ENCODE measurements at regions of chr18 and their contacts with region 1.

Region 1: DNA sequence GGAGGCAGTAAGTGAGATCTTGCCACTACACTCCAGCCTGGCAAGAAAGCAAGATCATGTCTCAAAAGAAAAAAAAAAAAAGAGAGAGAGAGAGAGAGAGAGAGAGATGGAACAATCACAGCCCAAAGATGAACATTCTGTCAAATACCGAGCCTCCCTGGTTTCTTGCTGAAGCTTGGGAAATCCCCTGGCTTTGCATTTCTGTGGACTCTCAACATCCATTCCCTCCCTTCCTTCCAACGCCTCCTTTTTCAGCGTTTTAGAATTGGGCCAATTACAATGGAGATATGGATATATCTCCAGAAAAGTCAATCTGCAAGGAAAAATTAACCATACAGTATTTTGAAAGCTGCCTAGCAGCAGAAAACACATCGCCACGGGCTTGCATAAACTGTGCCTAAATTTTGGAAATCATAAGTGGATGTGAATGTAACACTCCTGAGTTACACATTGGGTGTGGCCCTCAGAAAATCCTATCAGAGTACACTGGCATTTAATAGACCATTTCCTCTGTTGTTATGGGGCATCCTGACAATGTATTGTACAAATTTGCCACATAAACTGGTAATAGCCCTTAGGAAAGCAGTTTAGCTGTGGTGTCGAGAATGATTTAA is 67.2 kb upstream of the PHLPP1 start:
- DNase-seq: no peak
- ATAC-seq: no peak
- H3K4me3 ChIP-seq: no peak overlapping the region
- H3K27ac ChIP-seq: no peak overlapping the region
- H3K4me1 ChIP-seq: peaks cover 10% of the 10 kb centered on the region
- H3K27me3 ChIP-seq: no peaks in the 10 kb centered on the region
- CTCF ChIP-seq: no peak
- EP300 ChIP-seq: no peak
- POLR2A ChIP-seq: no peak
- RAD21 ChIP-seq: no peak

Region 2: GRCh38 chr18:62637807-62638687 is 10.1 kb before region 1 on chr18:
- CTCF ChIA-PET with region 1: interaction called, 13 read pairs
- POLR2A ChIA-PET with region 1: no interaction called
- RAD21 ChIA-PET with region 1: no interaction called
- SMC1A ChIA-PET with region 1: interaction called, 4 read pairs
- in situ Hi-C with region 1: no loop called
- intact Hi-C with region 1: no loop called
- DNase-seq: no peak
- ATAC-seq: peak; percentile 98
- H3K4me3 ChIP-seq: no peak overlapping the region
- H3K27ac ChIP-seq: no peak overlapping the region
- H3K4me1 ChIP-seq: 0 out of 2 replicates have a peak, but pooled peaks cover 6% of the 10 kb centered on the region
- H3K27me3 ChIP-seq: no peaks in the 10 kb centered on the region
- CTCF ChIP-seq: peak; percentile 74 to 84 (median 82)
- EP300 ChIP-seq: no peak
- POLR2A ChIP-seq: no peak
- RAD21 ChIP-seq: peak; percentile 65

Region 3: DNA sequence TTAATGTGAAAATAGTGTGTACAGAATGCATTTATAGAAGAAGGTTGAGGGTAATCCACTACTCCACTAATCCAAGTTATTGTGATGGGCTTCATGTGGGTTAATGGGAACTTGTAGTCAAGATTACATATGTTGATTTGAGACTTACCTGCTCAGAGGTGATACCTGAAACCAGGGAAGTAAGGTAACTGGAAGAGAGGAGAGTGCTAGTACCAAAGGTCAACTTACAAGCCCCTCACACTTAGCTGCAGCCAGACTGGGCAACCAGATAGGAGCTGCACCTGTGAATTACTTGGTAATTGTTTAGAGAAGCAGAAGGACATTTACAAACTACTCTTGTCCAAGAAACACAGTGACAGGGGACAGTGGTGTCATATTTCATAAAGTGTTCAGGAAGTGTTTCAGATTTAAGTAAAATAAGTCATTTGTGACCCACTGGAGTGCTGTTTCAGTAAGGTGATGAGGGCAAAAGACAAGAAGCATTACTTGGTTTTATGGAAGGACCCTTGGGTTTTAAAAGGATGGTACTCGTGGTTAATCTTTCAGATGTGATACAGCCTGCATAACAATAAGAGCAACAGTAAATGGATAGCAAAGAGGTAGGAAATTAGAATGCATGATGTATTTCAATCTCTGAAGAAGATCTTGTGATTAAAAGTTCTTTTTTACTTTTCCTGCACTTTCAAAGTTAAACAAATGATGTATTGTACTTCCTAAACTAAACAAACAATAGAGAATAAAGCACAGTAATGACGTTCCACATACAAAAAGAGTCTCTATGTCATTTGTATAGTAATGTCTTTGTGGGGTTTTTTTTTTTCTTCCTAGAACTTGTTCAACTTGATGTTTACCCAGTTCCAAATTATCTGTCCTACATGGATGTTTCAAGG is 256.5 kb after region 1 on chr18:
- CTCF ChIA-PET with region 1: no interaction called
- POLR2A ChIA-PET with region 1: no interaction called
- RAD21 ChIA-PET with region 1: no interaction called
- SMC1A ChIA-PET with region 1: no interaction called
- in situ Hi-C with region 1: no loop called
- intact Hi-C with region 1: no loop called
- DNase-seq: no peak
- ATAC-seq: no peak
- H3K4me3 ChIP-seq: no peak overlapping the region
- H3K27ac ChIP-seq: no peak overlapping the region
- H3K4me1 ChIP-seq: no peaks in the 10 kb centered on the region
- H3K27me3 ChIP-seq: no peaks in the 10 kb centered on the region
- CTCF ChIP-seq: no peak
- EP300 ChIP-seq: no peak
- POLR2A ChIP-seq: no peak
- RAD21 ChIP-seq: no peak